ENCODE measurements at regions of chr16 and their contacts with region 1.

Region 1: DNA sequence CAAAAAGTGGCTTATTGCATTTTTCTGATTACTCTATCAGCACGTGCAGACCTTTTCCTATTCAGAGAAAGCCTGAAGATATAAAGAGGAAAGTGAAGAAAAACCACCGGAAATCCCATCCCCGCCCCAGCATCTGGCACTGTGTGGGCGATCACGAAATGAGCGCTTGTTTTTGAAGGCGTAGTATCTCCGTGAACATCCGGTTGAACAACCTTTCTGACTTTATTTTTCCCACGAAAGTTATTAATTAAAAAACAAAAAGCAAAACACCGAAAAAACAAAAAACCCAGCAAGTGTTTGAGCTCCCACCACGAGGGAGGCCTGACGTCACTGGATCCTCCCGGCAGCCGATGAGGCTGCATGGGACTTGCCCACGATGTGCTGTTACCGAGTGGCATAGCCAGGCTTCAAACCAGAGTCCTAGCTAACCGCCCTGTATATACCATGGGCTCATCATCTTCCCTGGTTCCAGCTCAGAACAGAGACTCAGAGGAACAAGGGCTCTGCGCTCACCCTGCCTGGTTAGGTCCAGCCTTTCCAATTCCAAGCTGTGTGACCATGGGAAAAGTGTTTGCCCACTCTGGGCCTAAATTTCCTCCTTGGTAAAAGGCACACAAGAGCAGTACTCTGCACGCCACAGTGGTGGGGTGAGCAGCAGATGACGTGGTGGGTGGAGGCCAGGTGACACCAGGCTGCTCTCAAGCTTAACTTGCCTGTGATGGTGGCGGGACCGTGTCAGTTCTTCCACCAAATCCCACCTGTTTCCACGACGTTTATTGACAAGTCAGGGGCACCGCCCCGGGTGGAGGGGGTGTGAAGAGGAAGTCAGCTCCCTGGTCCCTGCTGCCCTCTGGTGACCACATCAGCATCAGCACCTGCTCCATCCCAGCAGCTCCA is 34.3 kb upstream of the IL21R start:
- DNase-seq: peak; percentile 73 to 95 (median 92)
- ATAC-seq: peak; percentile 82 to 85
- H3K4me3 Mint-ChIP-seq: peak overlapping the region; percentile 49 to 75 (median 71)
- H3K27ac Mint-ChIP-seq: peak overlapping the region in 9 of 10 donors; percentile 92 to 100 (median 99)
- H3K4me1 Mint-ChIP-seq: peaks cover 23 to 78% (median 55%) of the 10 kb centered on the region in 4 donors
- H3K27me3 Mint-ChIP-seq: no peaks in the 10 kb centered on the region

Region 2: DNA sequence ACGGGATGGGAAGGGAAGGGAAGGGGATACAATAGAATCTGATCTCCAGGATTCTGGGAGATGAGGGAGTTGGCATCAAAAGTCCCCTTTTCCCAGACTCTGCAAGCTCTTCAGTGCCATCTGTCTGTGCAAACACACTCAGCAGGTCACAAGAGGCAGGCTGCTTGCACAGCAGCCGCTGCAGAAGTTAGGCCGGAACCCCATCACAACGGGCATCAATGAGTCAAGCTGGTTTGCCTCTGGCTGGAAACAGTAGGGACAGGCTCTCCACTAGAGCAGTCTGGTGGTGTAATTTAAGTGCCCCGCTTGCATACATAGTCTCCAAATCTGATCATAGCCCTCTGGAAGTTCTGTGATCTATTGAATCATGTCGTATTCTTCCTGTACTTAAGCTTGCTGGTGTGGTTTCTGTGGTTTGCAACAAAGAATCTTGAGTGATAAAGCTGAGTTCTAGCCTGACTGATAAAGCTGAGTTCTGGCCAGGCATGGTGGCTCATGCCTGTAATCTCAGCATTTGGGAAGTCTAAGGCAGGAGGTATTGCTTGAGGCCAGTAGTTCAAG is 198.1 kb before region 1 on chr16:
- POLR2A ChIA-PET with region 1: interaction called, 15 read pairs
- DNase-seq: peak; percentile 34 to 91 (median 82)
- ATAC-seq: peak; percentile 92
- H3K4me3 Mint-ChIP-seq: peak overlapping the region; percentile 48 to 80 (median 68)
- H3K27ac Mint-ChIP-seq: peak overlapping the region; percentile 70 to 98 (median 96)
- H3K4me1 Mint-ChIP-seq: peaks cover 26 to 73% (median 67%) of the 10 kb centered on the region in 4 donors
- H3K27me3 Mint-ChIP-seq: no peaks in the 10 kb centered on the region

Region 3: GRCh38 chr16:27203429-27204231 is 164.1 kb before region 1 on chr16 and contains the start of gene KDM8:
- POLR2A ChIA-PET with region 1: interaction called, 12 read pairs
- DNase-seq: peak; percentile 98 to 100 (median 100)
- ATAC-seq: peak; percentile 79 to 83
- H3K4me3 Mint-ChIP-seq: peak within 1 kb of the TSS; percentile 85 to 100 (median 98)
- H3K27ac Mint-ChIP-seq: peak within 1 kb of the TSS; percentile 97 to 100 (median 100)
- H3K4me1 Mint-ChIP-seq: peaks cover 21 to 70% (median 61%) of the 10 kb centered on the region in 4 donors
- H3K27me3 Mint-ChIP-seq: peaks cover 0 to 3% (median 0%) of the 10 kb centered on the region in 5 donors
- polyA plus RNA-seq, gene KDM8: 3.8 to 6.2 (median 5.6) TPM

Region 4: DNA sequence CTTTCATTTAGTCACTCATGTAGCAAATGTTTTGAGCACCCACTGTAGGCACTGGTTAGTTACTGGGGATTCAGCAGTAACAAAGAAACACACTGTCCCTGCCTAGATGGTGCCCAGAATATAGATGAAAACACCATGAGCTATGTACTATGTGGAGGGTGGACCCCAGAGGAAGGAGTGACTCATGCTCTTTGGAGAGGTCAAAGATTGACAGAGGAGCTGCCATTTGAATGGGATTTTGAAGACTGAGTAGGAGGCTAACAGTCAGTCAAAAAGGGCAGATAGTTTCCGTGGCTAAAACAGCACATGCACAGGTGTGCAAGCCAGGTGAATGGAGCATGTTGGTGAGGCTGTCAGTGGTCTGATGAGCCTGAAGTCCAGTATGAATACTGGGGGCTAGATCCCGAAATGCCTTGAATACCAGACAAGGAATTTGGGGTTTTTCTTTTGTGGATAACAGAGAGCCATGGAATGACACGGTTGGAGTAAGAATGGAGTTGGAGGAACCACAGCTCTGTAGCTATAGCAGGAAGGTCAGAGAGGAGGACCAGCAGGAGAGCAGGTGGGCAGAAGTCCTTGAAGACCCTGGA is 40.4 kb after region 1 on chr16:
- POLR2A ChIA-PET with region 1: interaction called, 160 read pairs
- DNase-seq: peak in 3 of 10 donors; percentile 19 to 33 (median 26)
- ATAC-seq: peak; percentile 55 to 63
- H3K4me3 Mint-ChIP-seq: peak overlapping the region; percentile 35 to 99 (median 78)
- H3K27ac Mint-ChIP-seq: peak overlapping the region; percentile 87 to 100 (median 94)
- H3K4me1 Mint-ChIP-seq: peaks cover 41 to 94% (median 82%) of the 10 kb centered on the region in 4 donors
- H3K27me3 Mint-ChIP-seq: no peaks in the 10 kb centered on the region

Region 5: GRCh38 chr16:27461483-27462171 is 93.9 kb after region 1 on chr16:
- POLR2A ChIA-PET with region 1: interaction called, 19 read pairs
- DNase-seq: no peak
- ATAC-seq: no peak
- H3K4me3 Mint-ChIP-seq: peak overlapping the region in 7 of 10 donors; percentile 27 to 75 (median 37)
- H3K27ac Mint-ChIP-seq: peak overlapping the region in 9 of 10 donors; percentile 43 to 99 (median 88)
- H3K4me1 Mint-ChIP-seq: peaks cover 39 to 86% (median 68%) of the 10 kb centered on the region in 4 donors
- H3K27me3 Mint-ChIP-seq: no peaks in the 10 kb centered on the region